Caco-2 (cell line): ENCODE measurements at regions of chr3 and their contacts with region 1.

Region 1: DNA sequence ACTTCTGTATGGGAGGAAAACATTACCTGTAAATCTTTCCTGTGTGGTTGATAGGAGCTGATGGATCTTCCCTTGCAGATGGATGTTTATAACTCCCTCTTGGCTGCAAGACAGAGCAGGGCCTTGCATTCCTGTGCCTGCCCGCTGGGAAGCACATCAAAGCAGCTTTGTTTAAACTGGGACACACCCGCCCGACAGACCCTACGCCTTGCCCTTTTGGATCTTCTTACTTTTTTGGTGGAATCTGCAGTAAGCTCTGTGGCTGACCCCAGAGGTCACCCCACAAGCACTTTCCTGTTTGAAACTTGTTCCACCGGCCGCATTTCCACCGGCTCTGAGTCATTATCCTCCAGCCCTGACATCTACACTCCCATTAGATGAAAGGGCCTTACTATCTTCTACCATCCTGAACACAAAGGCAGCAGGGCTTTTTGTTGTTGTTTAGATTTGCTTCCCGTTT is 244.1 kb upstream of the STT3B start:
- DNase-seq: peak; percentile 93 to 97
- H3K4me3 ChIP-seq: no peak overlapping the region
- H3K4me3 Mint-ChIP-seq: peak overlapping the region; percentile 62
- H3K27ac Mint-ChIP-seq: peak overlapping the region; percentile 98
- H3K4me1 ChIP-seq: peaks cover 83% of the 10 kb centered on the region
- H3K4me1 Mint-ChIP-seq: peaks cover 57% of the 10 kb centered on the region
- H3K27me3 ChIP-seq: no peaks in the 10 kb centered on the region
- H3K27me3 Mint-ChIP-seq: no peaks in the 10 kb centered on the region
- CTCF ChIP-seq: no peak

Region 2: DNA sequence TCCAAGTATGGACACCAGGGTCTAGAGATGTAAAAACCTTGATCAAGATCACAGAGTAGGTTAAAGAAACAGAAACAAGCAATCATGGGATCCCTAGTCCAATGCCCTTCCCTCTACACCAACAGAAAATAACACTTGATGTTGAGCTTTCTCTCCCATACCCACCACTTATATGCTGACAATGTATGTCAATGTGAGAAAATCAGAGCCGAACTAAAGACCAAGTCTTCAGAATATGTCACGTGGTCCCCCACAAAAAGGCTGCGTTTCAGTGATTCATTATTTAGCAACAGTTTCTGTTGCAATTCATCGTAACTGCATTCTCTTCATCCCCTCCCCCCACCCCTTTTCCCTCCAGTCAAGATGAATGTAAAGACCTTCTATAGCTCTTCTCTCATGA is 34.9 kb before region 1 on chr3:
- CTCF ChIA-PET with region 1: no interaction called
- POLR2A ChIA-PET with region 1: no interaction called
- intact Hi-C with region 1: loop called (anchors 1 kb)
- DNase-seq: no peak
- H3K4me3 ChIP-seq: no peak overlapping the region
- H3K4me3 Mint-ChIP-seq: no peak overlapping the region
- H3K27ac Mint-ChIP-seq: peak overlapping the region; percentile 82
- H3K4me1 ChIP-seq: peaks cover 30% of the 10 kb centered on the region
- H3K4me1 Mint-ChIP-seq: peaks cover 29% of the 10 kb centered on the region
- H3K27me3 ChIP-seq: no peaks in the 10 kb centered on the region
- H3K27me3 Mint-ChIP-seq: no peaks in the 10 kb centered on the region
- CTCF ChIP-seq: no peak

Region 3: GRCh38 chr3:31275038-31275562 is 13.6 kb before region 1 on chr3:
- CTCF ChIA-PET with region 1: no interaction called
- POLR2A ChIA-PET with region 1: no interaction called
- intact Hi-C with region 1: loop called (anchors 1 kb)
- DNase-seq: peak in 1 of 2 experiments; percentile 30
- H3K4me3 ChIP-seq: no peak overlapping the region
- H3K4me3 Mint-ChIP-seq: no peak overlapping the region
- H3K27ac Mint-ChIP-seq: peak overlapping the region; percentile 6
- H3K4me1 ChIP-seq: peaks cover 39% of the 10 kb centered on the region
- H3K4me1 Mint-ChIP-seq: peaks cover 22% of the 10 kb centered on the region
- H3K27me3 ChIP-seq: no peaks in the 10 kb centered on the region
- H3K27me3 Mint-ChIP-seq: no peaks in the 10 kb centered on the region
- CTCF ChIP-seq: no peak

Region 4: DNA sequence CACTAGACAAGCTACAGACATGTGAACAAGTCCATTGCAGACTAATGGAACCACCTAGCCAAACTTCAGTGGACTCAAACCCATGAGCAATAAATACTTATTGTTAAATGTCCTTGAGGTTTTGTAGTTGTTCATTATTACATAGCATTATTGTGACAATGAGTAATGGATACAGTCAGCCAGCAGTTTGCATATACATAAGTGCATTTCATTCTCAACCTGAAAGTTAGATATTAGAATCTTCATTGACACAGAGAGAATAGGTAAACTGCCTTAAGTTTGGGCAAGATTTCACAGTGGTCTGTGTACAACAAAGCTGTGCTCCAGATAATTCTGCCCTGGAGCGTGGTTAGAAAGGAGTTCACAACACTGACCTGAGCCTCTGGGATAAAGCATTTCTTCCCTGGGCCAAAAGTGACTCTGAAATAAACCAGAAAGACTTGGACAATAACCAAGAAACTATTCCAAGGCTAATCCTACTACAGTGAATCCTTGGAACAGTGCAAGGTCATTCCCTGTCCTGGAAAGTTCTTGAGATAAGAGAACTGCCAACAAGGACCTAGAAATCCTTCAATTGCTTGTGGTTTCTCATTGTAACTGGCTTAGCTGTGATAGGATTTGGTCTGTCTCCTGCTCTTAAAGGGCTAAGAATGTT is 18.6 kb after region 1 on chr3:
- CTCF ChIA-PET with region 1: no interaction called
- POLR2A ChIA-PET with region 1: no interaction called
- intact Hi-C with region 1: loop called (anchors 2 kb)
- DNase-seq: no peak
- H3K4me3 ChIP-seq: no peak overlapping the region
- H3K4me3 Mint-ChIP-seq: no peak overlapping the region
- H3K27ac Mint-ChIP-seq: no peak overlapping the region
- H3K4me1 ChIP-seq: peaks cover 32% of the 10 kb centered on the region
- H3K4me1 Mint-ChIP-seq: peaks cover 12% of the 10 kb centered on the region
- H3K27me3 ChIP-seq: no peaks in the 10 kb centered on the region
- H3K27me3 Mint-ChIP-seq: no peaks in the 10 kb centered on the region
- CTCF ChIP-seq: no peak

Region 5: DNA sequence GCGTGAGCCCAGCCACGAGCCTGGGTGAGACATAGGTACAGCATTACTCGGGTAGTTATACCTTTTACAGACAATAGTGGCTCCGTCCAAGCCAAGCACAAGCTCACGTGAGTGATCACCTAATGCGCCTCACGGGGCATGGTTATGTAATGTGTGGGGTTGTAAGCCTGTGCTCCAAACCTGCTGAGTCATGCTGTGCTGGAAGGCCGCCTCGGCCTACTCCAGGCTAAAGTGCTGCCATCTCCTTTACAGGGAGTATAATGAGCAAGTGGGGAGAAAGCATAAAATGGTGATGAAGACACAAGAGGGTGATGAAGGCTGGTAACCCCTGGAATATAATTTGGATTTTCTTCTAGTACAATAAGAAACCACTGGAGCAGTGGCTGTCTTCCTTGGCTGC is 68.3 kb after region 1 on chr3:
- CTCF ChIA-PET with region 1: no interaction called
- POLR2A ChIA-PET with region 1: no interaction called
- intact Hi-C with region 1: loop called (anchors 5 kb)
- DNase-seq: no peak
- H3K4me3 ChIP-seq: no peak overlapping the region
- H3K4me3 Mint-ChIP-seq: no peak overlapping the region
- H3K27ac Mint-ChIP-seq: peak overlapping the region; percentile 81
- H3K4me1 ChIP-seq: peaks cover 31% of the 10 kb centered on the region
- H3K4me1 Mint-ChIP-seq: peaks cover 14% of the 10 kb centered on the region
- H3K27me3 ChIP-seq: no peaks in the 10 kb centered on the region
- H3K27me3 Mint-ChIP-seq: no peaks in the 10 kb centered on the region
- CTCF ChIP-seq: no peak

Region 6: GRCh38 chr3:31369637-31370379 is 81.1 kb after region 1 on chr3:
- CTCF ChIA-PET with region 1: no interaction called
- POLR2A ChIA-PET with region 1: no interaction called
- intact Hi-C with region 1: loop called (anchors 1 kb)
- DNase-seq: peak in 1 of 2 experiments; percentile 20
- H3K4me3 ChIP-seq: no peak overlapping the region
- H3K4me3 Mint-ChIP-seq: no peak overlapping the region
- H3K27ac Mint-ChIP-seq: peak overlapping the region; percentile 80
- H3K4me1 ChIP-seq: peaks cover 38% of the 10 kb centered on the region
- H3K4me1 Mint-ChIP-seq: peaks cover 27% of the 10 kb centered on the region
- H3K27me3 ChIP-seq: no peaks in the 10 kb centered on the region
- H3K27me3 Mint-ChIP-seq: no peaks in the 10 kb centered on the region
- CTCF ChIP-seq: no peak

Region 7: GRCh38 chr3:31531992-31532586 is 243.4 kb after region 1 on chr3:
- CTCF ChIA-PET with region 1: no interaction called
- POLR2A ChIA-PET with region 1: interaction called, 11 read pairs
- intact Hi-C with region 1: loop called (anchors 2 kb)
- DNase-seq: peak; percentile 99
- H3K4me3 ChIP-seq: peak overlapping the region; percentile 97
- H3K4me3 Mint-ChIP-seq: peak overlapping the region; percentile 89
- H3K27ac Mint-ChIP-seq: peak overlapping the region; percentile 98
- H3K4me1 ChIP-seq: peaks cover 19% of the 10 kb centered on the region
- H3K4me1 Mint-ChIP-seq: peaks cover 12% of the 10 kb centered on the region
- H3K27me3 ChIP-seq: no peaks in the 10 kb centered on the region
- H3K27me3 Mint-ChIP-seq: no peaks in the 10 kb centered on the region
- CTCF ChIP-seq: no peak